ENCODE measurements at regions of chr1 and their contacts with region 1.

Region 1: GRCh38 chr1:228664399-228664914 is 70.8 kb upstream of the RHOU start:
- DNase-seq: peak; percentile 72 to 81
- H3K4me3 ChIP-seq: no peak overlapping the region
- H3K27ac ChIP-seq: no peak overlapping the region
- H3K4me1 ChIP-seq: peaks cover 0 to 21% (median 9%) of the 10 kb centered on the region in 4 donors
- H3K27me3 ChIP-seq: no peaks in the 10 kb centered on the region
- CTCF ChIP-seq: peak; percentile 87

Region 2: DNA sequence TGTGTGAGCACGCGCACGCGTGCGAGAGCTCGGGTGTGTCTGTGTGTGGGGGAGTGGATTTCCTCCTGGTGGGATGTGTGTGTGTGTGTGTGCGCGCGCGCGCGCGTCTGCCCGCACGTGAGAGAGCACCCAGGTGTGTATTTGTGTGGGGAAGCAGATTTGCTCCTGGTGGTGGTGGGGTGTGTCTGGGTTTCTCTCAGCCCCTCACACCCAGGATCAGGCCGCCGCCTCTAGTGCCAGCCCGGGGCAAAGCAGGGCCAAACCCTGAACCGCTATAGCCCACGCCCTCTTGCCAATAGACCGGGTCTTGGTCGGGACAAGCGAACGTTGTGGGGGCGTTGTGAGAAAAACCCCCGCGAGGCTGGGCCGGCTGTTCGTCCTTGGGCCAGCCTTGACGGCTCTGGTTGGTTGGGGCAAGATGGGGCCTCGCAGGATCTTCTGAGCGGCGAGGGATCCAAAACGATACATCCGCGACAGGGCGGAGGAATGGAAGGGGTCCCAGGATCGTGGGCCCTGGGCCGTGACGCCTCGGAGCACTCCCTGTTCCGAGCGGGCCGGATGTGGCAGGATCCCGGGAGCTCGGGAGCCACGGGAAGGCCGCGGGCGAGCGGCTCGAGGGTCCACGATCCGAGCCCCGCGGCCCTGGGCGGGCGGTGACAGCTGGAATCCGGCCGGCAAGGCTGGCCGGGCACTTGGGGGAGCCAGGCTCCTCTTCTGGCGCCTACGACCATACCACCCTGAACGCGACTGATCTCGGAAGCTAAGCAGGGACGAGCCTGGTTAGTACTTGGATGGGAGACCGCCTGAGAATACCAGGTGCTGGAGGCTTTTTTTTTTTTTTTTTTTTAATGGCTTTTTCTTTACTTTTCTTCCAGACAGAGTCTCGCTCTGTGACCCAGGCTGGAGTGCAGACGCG is 109.1 kb before region 1 on chr1:
- intact Hi-C with region 1: no loop called
- DNase-seq: peak in 1 of 2 donors; percentile 38
- H3K4me3 ChIP-seq: no peak overlapping the region
- H3K27ac ChIP-seq: no peak overlapping the region
- H3K4me1 ChIP-seq: no peaks in the 10 kb centered on the region
- H3K27me3 ChIP-seq: peaks cover 0 to 8% of the 10 kb centered on the region in 2 donors
- CTCF ChIP-seq: no peak

Region 3: DNA sequence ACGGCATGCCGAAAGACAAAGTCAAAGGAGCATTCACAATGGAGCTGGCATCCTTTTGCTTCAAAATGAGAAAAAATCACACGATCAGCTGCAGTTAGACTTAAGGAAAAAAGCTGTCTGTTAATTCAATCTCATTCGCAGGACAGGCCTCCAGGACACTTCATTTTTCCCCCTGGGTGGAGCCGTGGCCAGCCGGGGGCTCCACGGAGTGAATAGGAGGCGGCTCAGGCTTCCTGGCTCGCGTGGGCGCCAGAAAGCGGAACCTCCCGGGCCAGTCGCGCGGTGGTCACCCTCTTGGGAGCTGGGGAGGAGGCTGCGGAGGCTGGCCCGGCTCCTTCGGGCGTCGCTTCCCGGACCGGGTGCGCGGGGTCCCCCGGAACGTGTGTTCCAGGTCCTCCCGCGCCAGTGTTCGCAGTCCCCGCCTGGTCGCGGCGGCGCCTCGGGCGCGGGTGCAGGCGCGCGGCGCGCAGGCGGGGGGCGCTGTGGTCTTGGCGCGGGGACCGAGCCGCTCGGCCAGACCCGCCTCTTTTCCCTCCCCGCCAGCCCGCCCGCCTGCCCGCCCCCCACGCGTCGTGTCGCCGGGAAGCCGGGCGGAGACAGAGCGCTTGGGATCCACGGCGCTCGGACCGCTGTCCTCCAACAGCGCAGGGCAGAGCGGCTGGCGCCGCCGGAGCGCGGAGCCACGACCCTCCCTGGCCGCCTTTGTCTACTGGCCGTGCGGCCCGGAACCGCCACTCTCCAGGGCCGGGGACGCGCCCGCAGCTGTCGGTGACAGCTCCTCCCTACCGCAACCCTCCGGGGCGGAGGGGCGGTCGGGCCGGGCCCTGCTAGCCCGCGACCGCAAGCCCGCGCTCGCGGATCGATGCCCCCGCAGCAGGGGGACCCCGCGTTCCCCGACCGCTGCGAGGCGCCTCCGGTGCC is 70.7 kb after region 1 on chr1 and contains the start of gene RHOU:
- intact Hi-C with region 1: loop called (anchors 10 kb)
- DNase-seq: peak; percentile 63 to 88
- H3K4me3 ChIP-seq: peak within 1 kb of the TSS; percentile 96 to 97
- H3K27ac ChIP-seq: peak within 1 kb of the TSS; percentile 89 to 95
- H3K4me1 ChIP-seq: peaks cover 0 to 34% (median 17%) of the 10 kb centered on the region in 4 donors
- H3K27me3 ChIP-seq: no peaks in the 10 kb centered on the region
- CTCF ChIP-seq: peak; percentile 83 to 93

Region 4: DNA sequence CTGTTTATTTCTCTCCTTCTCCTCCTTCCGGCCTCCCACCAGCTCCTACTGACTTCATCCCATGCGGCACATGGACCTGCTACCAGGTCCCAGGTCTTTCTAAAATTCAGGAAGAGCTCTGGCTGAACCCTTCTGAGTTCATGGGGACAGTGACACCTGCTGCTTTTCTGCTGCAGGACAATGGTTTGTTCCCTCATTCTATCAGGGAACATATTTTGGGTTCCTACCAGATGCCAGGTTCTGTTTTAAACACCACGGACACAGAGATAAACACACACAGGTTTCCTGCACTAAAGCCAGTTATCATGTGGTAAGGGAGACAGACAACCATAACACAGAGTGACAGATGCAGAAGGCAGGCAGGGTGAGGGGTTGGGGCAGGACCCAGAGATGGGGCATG is 492.4 kb after region 1 on chr1:
- intact Hi-C with region 1: loop called (anchors 10 kb)
- DNase-seq: peak; percentile 40 to 79
- H3K4me3 ChIP-seq: no peak overlapping the region
- H3K27ac ChIP-seq: no peak overlapping the region
- H3K4me1 ChIP-seq: peaks cover 0 to 14% (median 10%) of the 10 kb centered on the region in 4 donors
- H3K27me3 ChIP-seq: no peaks in the 10 kb centered on the region
- CTCF ChIP-seq: peak; percentile 77 to 83

Region 5: GRCh38 chr1:229227298-229227919 is 563.0 kb after region 1 on chr1:
- intact Hi-C with region 1: loop called (anchors 10 kb)
- DNase-seq: peak; percentile 77 to 85
- H3K4me3 ChIP-seq: no peak overlapping the region
- H3K27ac ChIP-seq: no peak overlapping the region
- H3K4me1 ChIP-seq: peaks cover 0 to 42% (median 22%) of the 10 kb centered on the region in 4 donors
- H3K27me3 ChIP-seq: no peaks in the 10 kb centered on the region
- CTCF ChIP-seq: peak; percentile 78 to 86

Region 6: DNA sequence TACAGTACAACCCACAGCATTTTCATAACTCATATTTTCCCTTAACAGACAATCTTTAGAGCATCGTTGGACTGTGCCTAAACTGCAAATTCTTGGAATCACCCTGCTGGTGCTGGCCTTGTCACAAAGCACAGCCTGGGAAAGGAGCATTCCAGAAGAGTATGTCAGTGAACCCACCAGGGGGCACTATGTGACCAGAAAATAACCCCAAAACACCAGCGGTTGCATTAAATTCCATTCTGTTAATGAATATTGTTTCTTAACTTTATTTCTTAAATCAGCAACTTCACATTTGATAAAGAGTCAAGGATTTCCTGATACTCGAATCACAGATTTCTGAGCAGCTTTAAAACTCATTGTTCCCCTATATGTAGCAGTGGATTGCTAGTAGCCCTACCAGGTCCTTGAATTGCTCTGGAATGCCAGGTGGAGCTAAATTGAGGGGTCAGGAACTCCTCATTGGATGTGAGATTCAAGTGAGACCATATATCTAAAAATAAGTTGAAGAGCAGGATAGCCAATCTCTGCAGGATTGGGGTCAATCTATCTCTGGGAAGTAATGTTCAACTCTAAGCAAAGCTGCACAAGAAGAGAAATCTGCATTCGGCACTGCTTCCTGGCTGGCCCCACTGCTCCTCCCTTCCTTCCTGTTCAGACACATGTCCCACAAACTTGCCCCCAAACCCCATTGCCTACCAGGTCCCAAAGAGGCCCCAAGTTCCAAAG is 593.7 kb after region 1 on chr1:
- intact Hi-C with region 1: loop called (anchors 10 kb)
- DNase-seq: peak in 1 of 2 donors; percentile 49
- H3K4me3 ChIP-seq: no peak overlapping the region
- H3K27ac ChIP-seq: no peak overlapping the region
- H3K4me1 ChIP-seq: no peaks in the 10 kb centered on the region
- H3K27me3 ChIP-seq: no peaks in the 10 kb centered on the region
- CTCF ChIP-seq: peak; percentile 80 to 90

Region 7: DNA sequence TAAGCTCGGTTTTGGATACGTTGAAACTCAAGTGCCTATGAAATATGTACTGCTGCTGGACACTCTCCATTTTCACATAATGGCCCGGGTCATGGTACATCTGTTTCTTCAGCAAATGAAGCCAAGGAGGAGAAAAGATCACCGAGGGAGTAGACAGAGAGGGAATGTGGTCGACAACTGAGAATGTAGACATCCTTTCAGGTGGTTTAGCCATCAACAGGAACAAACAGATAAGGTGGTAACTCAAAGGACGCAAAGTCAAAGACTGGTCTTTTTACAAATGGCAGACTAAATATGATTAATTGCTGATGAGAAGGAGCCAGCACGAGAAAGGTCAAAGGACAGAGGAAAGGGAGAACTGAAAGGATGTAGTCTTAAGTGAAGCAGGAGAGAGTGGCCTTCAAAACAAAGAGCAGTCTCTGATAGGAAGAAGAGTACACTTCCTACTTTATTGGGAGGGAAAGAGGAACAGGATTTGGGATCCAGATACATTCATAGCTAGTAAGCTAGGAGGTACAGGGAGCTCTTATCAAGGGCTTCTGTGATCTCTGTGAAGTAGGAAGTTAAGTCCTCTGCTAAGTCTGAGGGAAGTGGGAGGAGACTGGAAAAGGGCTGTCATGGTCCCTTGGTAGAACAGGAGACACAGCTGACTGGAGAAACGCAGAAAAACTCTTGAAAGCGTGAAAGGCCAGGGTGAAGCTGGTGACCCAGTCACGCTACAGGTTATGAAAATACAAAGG is 815.4 kb after region 1 on chr1:
- intact Hi-C with region 1: loop called (anchors 10 kb)
- DNase-seq: no peak
- H3K4me3 ChIP-seq: no peak overlapping the region
- H3K27ac ChIP-seq: no peak overlapping the region
- H3K4me1 ChIP-seq: no peaks in the 10 kb centered on the region
- H3K27me3 ChIP-seq: no peaks in the 10 kb centered on the region
- CTCF ChIP-seq: no peak

Measured in tibial artery (tissue), 4 donors.